Uterus (tissue), 4 donors: ENCODE measurements at regions of chr4 and their contacts with region 1.

Region 1: DNA sequence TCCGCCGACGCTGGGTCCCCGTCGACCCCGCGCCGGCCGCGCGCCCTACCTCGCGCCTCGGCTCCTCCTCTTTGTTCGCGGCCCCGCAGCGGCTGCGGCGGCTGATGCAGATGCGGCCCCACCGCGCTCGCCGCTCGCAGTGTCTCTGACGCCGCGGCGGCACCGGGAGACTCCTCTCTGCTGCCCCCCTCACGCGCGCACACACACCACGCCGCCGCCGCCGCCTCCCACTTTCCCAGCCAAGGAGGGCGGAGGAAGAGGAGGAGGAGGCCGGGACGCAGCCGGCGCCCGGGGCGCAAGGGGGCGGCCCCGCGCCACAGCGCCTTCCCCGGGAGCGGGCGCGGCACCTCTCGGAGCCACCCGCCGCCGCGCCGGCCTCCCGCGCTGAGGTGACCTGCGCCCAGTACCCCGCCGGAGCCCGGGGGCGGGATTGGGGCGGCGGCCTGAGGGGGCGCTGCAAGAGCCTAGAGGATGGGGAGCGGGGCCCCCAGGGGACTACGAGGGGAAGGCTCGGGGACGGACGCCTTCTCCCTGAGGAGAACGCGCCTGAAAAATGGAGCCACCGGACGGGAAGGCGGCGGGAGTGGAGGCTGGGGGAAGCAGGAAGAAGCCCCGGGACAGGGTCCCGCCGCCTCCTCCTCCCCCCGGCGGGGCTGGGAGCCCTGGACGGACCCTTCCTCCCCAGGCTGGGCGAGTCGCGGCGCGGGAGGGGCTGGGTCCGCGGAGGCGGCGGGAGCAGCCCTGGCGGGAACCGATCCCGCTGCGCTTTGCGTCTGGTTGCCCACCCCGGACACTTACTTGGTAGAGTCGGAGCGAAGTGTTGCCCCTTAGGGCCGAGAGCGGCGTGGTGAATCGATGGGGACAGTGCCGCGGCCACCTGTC is at the start of gene SH3RF1:
- DNase-seq: peak; percentile 90
- H3K4me3 ChIP-seq: peak within 1 kb of the TSS; percentile 66 to 71
- H3K27ac ChIP-seq: peak within 1 kb of the TSS; percentile 87 to 92
- H3K4me1 ChIP-seq: peaks cover 0 to 6% of the 10 kb centered on the region in 2 donors
- H3K27me3 ChIP-seq: no peaks in the 10 kb centered on the region
- CTCF ChIP-seq: peak in 3 of 4 experiments; percentile 27 to 55 (median 41)
- POLR2A ChIP-seq: peak; percentile 74 to 95
- total RNA-seq, gene SH3RF1: 5.9 to 41.2 (median 15.0) TPM

Region 2: DNA sequence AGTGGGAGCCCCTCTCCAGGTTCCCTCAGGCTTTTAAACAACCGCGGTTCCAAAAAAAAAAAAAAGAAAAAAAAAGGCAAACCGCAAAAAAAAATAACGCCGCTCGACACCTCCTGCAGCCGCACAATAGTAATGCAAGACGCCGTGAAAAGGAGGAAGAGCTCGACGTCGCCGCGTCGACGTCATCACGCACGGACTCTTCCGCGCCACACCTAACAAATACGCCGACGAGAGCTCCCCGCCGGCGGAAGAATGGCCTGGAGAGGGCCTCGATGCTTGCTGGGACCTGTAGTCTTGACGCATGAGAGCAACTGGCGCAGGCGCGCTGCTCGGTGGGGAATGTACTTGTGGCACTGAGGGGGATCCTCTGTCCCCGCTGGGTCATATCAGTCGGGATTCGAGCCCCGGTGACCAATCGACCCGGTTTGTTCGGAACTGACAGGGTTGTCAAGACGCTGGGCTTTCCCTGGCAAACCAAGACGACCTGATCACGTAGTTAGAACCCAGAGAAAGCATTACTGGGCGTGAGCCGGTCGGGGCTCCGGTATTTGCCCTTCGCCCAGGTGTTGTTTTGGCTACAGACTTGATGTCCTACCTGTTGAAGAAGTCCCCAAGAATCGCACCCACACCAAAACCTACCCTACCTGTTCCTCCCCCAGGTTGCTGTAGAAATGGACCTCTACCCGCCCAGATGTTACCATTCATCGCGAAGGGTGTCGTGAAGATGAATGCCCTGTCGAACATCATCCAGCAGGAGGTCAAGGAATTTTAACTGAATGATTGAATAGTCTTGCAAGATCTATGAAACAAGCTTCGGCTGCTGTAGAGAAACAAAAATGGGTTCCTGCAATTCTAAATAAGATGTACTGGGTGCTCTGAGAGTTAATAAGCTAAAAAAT is 260.7 kb before region 1 on chr4 and contains the start of gene CBR4:
- intact Hi-C with region 1: loop called (anchors 10 kb)
- DNase-seq: peak; percentile 96 to 98
- H3K4me3 ChIP-seq: peak within 1 kb of the TSS; percentile 61 to 74
- H3K27ac ChIP-seq: peak within 1 kb of the TSS; percentile 88 to 96
- H3K4me1 ChIP-seq: no peaks in the 10 kb centered on the region
- H3K27me3 ChIP-seq: no peaks in the 10 kb centered on the region
- CTCF ChIP-seq: peak in 2 of 4 experiments; percentile 19 to 29
- POLR2A ChIP-seq: peak; percentile 82 to 89
- total RNA-seq, gene CBR4: 9.0 to 40.8 (median 21.6) TPM

Region 3: DNA sequence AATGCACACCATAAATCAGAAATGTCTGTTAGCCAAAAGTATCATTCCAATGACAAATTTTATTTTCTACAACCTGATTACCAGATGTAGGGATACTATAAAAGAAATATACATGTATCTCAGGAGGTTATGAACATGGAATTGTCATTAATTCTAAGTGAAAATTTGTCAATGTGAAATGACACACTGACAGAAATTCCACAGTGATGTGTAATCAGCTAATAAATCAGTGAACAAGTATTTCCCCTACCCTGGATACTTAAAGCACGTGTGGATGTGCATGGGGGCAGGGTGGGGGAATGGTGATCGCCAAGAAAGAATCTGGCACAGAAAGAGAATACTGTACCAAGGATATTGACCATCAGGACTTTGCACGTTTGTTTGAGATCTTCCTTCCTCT is 123.9 kb before region 1 on chr4:
- intact Hi-C with region 1: no loop called
- DNase-seq: no peak
- H3K4me3 ChIP-seq: no peak overlapping the region
- H3K27ac ChIP-seq: no peak overlapping the region
- H3K4me1 ChIP-seq: no peaks in the 10 kb centered on the region
- H3K27me3 ChIP-seq: no peaks in the 10 kb centered on the region
- CTCF ChIP-seq: no peak
- POLR2A ChIP-seq: no peak